IMR-90 (cell line): ENCODE measurements at regions of chr1 and their contacts with region 1.

Region 1: DNA sequence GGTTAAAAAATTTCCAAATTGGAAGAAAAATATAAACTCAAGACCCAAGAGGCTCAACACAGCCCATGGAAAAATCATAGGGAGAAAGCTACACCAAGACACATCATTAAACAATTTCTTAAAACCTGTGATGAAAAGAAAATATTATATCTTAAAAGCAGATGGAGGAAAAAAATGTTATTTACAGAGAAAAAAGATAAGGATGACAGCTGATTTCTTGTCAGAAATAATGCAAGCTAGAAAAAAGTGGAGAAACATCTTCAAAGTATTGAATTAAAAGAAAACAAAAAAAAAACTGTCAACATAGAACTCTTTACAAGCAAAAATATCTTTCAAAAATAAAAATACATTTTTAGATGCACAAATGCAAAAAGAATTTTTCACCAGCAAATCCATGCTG is 930.5 kb downstream of the ADGRL2 start:
- DNase-seq: no peak
- ATAC-seq: no peak
- H3K4me3 ChIP-seq: no peak overlapping the region
- H3K27ac ChIP-seq: no peak overlapping the region
- H3K4me1 ChIP-seq: no peaks in the 10 kb centered on the region
- H3K27me3 ChIP-seq: no peaks in the 10 kb centered on the region
- CTCF ChIP-seq: no peak
- POLR2A ChIP-seq: no peak
- RAD21 ChIP-seq: no peak

Region 2: GRCh38 chr1:82632155-82632554 is 99.1 kb before region 1 on chr1:
- CTCF ChIA-PET with region 1: no interaction called
- POLR2A ChIA-PET with region 1: no interaction called
- dilution Hi-C with region 1: no loop called
- in situ Hi-C with region 1: no loop called
- intact Hi-C with region 1: no loop called
- DNase-seq: no peak
- ATAC-seq: no peak
- H3K4me3 ChIP-seq: no peak overlapping the region
- H3K27ac ChIP-seq: no peak overlapping the region
- H3K4me1 ChIP-seq: no peaks in the 10 kb centered on the region
- H3K27me3 ChIP-seq: no peaks in the 10 kb centered on the region
- CTCF ChIP-seq: no peak
- POLR2A ChIP-seq: no peak
- RAD21 ChIP-seq: no peak

Region 3: GRCh38 chr1:82704393-82704792 is 26.8 kb before region 1 on chr1:
- CTCF ChIA-PET with region 1: no interaction called
- POLR2A ChIA-PET with region 1: interaction called, 20 read pairs
- dilution Hi-C with region 1: no loop called
- in situ Hi-C with region 1: no loop called
- intact Hi-C with region 1: no loop called
- DNase-seq: no peak
- ATAC-seq: no peak
- H3K4me3 ChIP-seq: no peak overlapping the region
- H3K27ac ChIP-seq: no peak overlapping the region
- H3K4me1 ChIP-seq: no peaks in the 10 kb centered on the region
- H3K27me3 ChIP-seq: no peaks in the 10 kb centered on the region
- CTCF ChIP-seq: no peak
- POLR2A ChIP-seq: no peak
- RAD21 ChIP-seq: no peak

Region 4: DNA sequence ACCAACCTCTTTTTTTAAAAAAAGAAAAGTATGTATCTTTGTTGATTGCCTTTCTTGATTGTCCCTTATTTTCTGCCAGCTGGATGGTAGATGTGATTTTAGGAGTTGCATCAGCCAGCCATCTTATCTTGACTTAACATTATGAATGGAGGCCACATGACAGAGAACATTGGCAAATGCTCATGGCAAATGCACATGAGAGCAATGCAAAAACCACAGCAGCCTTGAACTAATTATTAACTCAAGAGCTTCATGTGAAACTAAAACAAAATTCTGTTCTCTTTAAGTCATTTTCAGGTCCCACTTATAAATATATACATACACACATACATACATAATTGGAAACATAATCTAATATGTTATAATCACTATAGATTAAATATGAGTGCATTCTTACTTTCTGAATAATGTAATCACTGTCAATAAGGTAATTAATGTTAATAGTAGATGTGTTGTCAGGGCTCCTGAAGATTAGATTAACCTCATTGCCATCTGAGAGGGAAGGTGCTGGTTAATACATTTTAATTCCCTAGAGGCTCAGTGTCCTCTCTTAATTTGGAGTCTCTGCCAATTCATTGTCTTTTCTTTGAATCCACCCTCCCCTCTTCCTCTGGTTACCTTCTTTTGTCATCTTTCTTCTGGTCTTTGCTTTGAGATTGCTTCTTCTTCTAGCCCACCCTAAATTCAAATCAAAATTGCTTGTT is 31.8 kb after region 1 on chr1:
- CTCF ChIA-PET with region 1: no interaction called
- POLR2A ChIA-PET with region 1: no interaction called
- dilution Hi-C with region 1: no loop called
- in situ Hi-C with region 1: no loop called
- intact Hi-C with region 1: loop called (anchors 5 kb)
- DNase-seq: no peak
- ATAC-seq: no peak
- H3K4me3 ChIP-seq: no peak overlapping the region
- H3K27ac ChIP-seq: no peak overlapping the region
- H3K4me1 ChIP-seq: no peaks in the 10 kb centered on the region
- H3K27me3 ChIP-seq: no peaks in the 10 kb centered on the region
- CTCF ChIP-seq: no peak
- POLR2A ChIP-seq: no peak
- RAD21 ChIP-seq: no peak